HEK293T (cell line): ENCODE measurements at regions of chr9 and their contacts with region 1.

Region 1: DNA sequence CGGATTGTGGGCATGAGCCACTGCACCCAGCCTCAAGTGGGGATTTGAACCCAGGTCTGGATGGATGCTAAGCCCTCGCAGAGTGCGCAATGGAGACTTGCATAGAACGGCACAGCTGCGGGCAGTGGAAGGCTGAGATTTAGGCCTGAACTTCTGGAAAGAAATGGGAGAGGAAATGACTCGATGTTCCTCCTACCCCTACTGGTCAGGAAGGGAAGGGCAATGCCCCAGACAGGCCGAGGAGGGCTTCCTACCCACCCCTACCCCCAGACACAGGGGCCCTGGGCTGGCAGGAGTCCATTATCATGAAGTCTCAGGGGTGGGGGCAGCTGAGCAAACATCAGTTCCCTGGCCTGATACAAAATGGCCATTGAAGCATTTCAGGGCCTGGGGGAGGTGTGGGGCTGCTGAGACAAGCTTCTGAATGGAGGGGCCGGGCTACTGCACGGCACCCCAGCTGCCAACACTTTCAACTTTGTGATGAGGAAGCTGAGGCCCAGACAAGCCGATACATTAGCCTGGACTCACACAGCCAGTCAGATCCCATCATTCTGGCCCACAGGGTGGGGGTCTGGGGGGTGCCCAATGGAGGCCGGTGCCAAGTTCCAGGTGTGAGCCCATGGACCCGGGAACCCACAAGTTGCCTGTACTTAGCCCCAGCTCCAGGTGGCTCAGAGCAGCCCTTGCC is 13.5 kb upstream of the WDR38 start:
- DNase-seq: peak; percentile 59

Region 2: DNA sequence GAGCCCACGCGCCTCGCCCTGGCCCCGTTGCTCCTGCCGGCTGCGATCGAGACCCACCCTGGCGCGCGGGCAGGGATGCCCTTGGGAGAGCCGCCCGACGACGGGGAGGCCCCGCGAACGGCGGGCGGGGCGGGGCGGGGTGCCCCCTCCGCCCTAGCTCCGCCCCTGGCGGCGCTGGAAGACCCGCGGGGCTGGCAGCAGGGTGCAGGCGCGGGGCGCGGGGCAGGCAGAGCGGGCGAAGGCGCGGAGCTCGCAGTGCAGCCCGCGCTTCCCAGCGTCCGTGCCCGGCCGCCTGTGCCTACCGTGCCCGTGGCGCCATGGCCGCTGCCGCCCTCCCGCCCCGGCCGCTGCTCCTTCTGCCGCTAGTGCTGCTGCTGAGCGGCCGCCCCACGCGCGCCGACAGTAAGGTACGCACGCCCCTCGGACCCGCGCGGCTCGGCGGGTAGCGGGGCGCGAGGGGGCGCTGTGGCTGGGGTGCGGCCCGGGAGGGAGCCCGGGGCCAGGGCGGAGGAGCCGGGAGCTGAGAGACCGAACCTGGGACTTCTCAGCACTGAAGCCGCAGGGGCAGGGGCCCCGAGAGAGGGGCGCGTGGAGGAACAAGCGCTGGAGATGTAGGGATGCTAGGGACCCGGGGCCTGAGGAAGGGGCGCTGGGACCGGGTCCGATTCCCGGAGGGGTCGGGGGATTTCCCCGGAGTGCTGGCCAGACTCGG is 62.6 kb before region 1 on chr9 and contains the start of gene OLFML2A:
- CTCF ChIA-PET with region 1: interaction called, 11 read pairs
- POLR2A ChIA-PET with region 1: no interaction called
- DNase-seq: peak; percentile 44

Region 3: GRCh38 chr9:124829284-124829669 is 10.5 kb before region 1 on chr9:
- CTCF ChIA-PET with region 1: interaction called, 11 read pairs
- POLR2A ChIA-PET with region 1: interaction called, 3 read pairs
- DNase-seq: no peak

Region 4: DNA sequence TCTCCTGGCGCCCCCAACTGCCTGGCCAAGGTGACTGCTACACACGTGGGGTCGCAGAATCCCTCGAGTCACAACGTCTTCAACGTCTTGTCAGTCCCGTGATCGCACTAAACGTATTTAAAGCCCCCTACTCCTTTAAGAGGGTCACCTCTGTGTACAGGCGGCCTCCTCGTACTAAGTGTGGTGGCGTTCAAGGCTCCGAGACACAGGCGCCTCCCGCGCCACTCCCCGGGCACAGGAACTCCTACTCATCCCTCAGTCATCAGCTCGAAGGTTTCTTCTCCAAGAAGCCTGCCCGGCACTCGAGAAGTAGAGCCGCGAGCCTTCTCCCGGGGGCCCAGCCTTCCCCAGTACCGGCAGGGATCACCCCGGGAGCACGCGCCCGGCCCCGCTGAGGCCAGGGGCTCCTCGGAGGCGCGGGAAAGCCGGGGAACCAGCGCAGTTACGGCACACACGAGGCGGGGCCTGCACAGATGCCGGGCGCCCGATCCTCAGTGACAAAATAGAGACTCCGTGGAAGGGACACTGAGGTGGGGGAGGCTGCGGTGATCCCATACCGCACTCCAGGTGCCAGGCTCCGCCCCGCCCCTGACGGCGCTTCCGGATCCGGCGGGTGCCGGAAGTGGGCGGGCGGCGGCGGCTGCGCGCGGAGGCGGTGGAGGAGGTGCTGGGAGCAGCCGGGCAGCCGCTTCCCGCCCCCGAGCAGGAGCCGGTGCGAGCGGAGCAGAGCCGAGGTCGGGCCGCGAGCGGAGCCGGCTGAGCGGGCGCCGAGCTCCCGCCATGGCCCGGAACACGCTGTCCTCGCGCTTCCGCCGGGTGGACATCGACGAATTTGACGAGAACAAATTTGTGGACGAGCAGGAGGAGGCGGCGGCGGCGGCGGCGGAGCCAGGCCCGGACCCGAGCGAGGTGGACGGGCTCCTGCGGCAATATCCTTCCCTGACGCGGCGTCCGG is 29.0 kb after region 1 on chr9:
- CTCF ChIA-PET with region 1: no interaction called
- POLR2A ChIA-PET with region 1: no interaction called
- DNase-seq: peak; percentile 93

Region 5: DNA sequence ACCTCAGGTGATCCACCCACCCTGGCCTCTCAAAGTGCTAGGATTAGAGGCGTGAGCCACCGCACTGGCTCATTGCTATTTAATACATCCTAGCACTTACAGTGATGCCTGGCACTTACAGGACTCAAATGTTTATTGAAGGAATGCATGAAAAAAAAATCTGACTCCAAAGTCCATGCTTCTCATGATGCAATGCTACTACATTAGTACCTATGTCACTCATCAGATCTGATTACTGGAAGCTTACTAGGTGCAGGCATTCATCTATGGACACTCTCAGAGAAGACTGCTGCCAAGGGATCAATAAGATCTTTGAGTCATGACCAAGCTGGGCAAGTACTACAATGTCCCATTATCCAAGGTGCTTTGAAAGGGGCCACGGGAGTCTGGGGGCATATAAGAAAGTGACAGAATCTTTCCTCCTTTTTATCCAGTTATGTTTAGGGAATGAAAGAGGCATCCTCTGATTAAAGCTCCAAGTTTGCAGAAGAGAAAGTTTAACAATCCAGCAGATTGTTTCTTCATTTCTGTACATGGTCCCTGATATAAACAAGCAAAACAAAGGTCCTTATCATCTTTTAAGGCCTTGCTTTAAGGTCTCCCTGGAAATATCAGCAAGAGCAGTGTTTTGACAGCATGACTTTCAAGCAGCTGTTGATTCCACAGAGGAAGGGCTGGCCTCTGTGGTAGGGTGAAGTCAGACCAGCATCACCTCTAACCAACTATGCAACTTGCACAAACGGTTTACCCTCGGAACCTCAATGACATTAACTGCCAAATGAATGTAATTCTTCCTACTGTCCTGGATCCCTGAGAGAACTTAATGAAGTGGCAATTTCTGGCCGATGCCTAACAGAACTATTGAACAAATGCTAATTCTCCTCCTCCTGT is 58.1 kb after region 1 on chr9:
- CTCF ChIA-PET with region 1: no interaction called
- POLR2A ChIA-PET with region 1: no interaction called
- DNase-seq: no peak

Region 6: DNA sequence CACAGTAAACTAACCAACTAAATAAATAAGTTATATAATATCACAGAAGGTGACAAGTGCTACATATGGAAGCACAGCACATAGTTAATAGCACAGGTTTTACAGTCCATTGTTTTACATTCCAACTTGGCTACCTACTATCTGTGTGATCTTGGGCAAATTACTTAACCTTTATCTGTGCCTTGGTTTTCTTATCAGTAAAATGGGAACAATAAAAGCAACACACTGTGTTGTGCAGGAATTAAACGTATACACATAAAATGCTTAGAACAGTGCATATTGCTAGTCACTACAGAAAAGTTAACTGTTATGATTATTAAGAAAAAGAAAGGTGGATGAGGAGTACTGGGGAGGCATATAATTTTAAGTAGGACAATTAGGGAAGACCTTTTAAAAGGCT is 143.9 kb after region 1 on chr9:
- CTCF ChIA-PET with region 1: no interaction called
- POLR2A ChIA-PET with region 1: no interaction called
- DNase-seq: no peak